ENCODE measurements at regions of chr16 and their contacts with region 1.

Region 1: DNA sequence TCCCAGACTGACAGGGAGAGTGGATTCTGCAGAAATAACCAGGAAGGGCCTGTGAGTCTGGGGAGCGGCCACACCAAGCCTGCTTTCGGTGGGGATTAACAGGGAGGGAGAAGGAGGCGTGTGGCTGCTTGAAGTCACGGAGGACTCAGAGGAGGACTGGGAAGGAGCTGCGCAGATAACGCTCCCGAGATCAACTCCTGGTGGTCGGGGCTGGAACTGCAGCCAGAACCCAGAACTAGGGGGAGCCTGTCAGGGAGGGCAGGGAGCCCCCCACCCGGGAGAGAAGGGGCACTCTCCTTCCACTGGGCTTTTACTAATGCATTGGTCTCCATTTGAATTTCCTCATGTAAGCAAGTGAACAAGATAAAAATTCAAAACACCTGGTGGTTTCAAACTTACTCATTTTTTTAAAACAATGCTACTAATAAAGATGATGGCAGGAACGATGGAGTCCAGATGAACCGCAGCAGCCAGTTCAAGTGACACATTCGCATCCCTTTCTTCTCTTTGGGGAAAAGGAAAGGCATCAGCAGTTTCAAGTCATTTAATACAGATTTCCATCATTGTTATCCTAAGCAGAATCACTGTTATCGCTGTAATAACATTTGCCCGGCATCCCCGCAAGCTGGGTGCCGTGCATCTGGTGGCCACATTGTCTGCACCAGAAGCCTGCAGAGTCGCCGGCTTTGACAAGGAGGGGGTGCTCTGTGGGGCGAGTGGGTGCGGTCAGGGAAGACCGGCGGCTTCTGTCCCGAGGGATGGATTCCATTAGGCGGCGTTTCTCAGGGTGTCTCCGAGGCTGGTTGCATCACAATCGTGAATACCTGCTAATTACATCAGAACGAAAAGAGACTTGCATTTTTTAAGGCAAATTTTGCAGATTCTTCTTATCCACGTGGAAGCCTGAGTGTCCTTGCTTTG is 183.0 kb downstream of the FOXL1 start:
- DNase-seq: no peak
- ATAC-seq: peak; percentile 53 to 62
- H3K4me3 ChIP-seq: no peak overlapping the region
- H3K27ac ChIP-seq: no peak overlapping the region
- H3K4me1 ChIP-seq: no peaks in the 10 kb centered on the region
- H3K27me3 ChIP-seq: peaks cover 19 to 58% (median 38%) of the 10 kb centered on the region in 3 donors
- CTCF ChIP-seq: peak; percentile 44 to 76 (median 72)
- POLR2A ChIP-seq: no peak

Region 2: DNA sequence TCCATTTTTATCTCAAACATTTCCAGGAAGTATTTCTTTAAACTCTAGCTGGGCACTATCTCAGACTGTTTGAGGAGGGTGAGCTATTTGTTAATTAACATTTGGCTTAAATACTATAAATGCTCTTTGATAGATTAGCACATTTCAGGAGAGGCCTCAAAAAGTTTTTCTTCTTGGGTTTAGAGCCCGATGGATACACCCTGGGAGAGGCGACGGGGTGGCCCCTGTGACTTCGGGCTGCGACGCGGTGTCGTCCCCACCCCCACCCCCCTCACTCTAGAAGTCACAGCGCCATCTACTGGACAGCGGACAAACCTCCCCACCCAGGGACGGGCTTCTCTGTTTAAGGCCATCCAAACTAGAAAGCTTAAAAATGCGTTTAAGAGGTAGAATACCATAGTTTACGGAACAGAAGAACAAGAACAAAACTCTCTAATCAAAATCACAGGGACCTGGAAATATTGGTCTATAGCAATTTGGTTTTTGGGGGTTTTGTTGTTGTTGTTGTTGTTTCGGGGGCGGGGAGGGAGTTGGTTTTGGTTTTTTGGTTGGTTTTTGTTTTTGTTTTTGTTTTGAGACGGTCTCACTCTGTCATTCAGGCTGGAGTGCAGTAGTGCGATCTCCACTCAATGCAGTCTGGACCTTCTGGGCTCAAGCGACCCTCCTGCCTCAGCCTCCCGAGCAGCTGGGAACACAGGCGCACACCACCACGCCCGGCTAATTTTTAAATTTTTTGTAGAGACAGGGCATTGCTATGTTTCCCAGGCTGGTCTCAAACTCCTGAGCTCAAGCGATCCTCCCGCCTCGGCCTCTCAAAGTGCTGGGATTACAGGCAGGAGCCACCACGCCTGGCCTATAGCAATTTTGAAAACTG is 301.4 kb after region 1 on chr16:
- in situ Hi-C with region 1: loop called in 1 of 4 experiments (anchors 10 kb)
- intact Hi-C with region 1: loop called (anchors 5 kb)
- DNase-seq: peak in 1 of 2 donors; percentile 45
- ATAC-seq: peak; percentile 92
- H3K4me3 ChIP-seq: peak overlapping the region in 1 of 4 donors; percentile 33
- H3K27ac ChIP-seq: no peak overlapping the region
- H3K4me1 ChIP-seq: no peaks in the 10 kb centered on the region
- H3K27me3 ChIP-seq: peaks cover 0 to 24% (median 4%) of the 10 kb centered on the region in 3 donors
- CTCF ChIP-seq: peak; percentile 58 to 84 (median 79)
- POLR2A ChIP-seq: no peak

Measured in gastrocnemius medialis (tissue), 4 donors.